Activated CD4-positive, alpha-beta T cell treated with anti-CD3 and anti-CD28 coated beads for 36 hours (primary cell): ENCODE measurements at regions of chr9 and their contacts with region 1.

Region 1: DNA sequence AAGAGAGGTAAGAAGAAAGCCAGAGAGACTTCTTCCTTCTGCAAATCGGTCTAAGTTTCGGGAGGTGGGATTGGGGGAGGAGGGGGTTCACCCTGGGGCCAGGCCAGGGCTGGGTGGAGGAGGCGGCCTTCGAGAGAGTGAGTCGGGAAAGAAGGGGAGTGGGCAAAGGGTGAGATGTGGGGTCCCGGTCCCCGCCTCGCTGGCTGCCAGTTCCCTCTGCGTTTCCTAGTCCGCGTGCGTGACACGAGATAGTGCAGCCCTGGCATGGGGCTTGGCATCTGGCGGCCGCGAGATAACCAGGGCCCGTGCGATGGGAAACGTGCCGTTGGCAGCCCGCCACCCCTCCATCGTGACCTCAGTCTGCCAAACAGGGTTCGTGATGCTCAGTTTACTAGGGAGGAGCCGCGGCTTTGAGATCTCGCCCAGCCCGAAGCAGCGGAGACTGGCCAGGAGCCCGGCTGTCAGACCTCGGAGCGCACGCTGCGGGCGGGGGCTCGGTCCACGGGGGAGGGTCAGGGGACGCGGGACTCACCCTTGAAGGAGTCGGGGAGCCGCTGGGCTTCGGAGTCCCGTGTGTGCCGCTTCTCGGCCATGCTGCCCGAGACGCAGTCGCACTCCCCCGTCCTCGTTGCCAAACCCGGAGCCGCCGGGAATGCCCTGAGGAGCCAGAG is at the start of gene STOM:
- DNase-seq: peak; percentile 81
- ATAC-seq: peak; percentile 57
- H3K4me3 Mint-ChIP-seq: peak within 1 kb of the TSS; percentile 76
- H3K27ac Mint-ChIP-seq: peak within 1 kb of the TSS; percentile 95
- H3K4me1 Mint-ChIP-seq: peaks cover 27% of the 10 kb centered on the region
- H3K27me3 Mint-ChIP-seq: no peaks in the 10 kb centered on the region
- total RNA-seq, gene STOM: 34.7 to 44.5 TPM

Region 2: DNA sequence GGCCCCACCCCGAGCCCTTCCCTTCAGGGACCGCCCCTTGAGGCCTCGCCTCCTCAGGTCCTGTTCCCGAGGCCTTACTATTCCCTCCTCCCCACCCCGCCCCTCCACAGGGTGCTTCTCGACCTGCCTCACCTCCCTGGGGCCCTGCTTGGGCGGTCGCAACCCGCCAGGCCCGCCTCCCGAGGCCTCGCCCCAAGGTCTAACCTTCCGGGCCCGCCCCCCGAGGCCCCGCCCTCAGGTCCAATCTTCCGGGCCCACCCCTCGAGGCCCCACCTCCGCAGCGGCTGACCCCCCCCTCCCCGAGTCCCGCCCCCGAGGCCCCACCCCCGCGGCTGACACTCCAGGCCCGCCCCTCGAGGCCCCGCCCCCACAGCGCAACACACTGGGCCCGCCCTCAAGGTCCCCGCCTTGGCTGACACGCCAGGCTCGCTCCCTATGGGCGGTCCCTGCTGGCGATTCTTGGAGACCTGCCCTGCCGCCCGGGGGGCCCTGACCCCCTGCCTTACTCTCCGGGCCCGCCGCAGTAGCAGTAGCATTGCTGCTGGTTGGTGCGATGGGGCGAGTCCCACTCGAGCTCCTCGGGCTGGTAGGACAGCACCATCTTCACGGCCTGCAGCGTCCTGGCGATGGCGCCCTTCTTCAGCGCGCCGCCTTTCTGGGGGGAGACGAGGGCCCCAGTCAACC is 500.9 kb before region 1 on chr9:
- CTCF ChIA-PET with region 1: no interaction called
- POLR2A ChIA-PET with region 1: no interaction called
- intact Hi-C with region 1: loop called in 1 of 2 experiments (anchors 1 kb)
- DNase-seq: peak; percentile 99
- ATAC-seq: peak; percentile 94
- H3K4me3 Mint-ChIP-seq: peak overlapping the region; percentile 64
- H3K27ac Mint-ChIP-seq: peak overlapping the region; percentile 70
- H3K4me1 Mint-ChIP-seq: peaks cover 40% of the 10 kb centered on the region
- H3K27me3 Mint-ChIP-seq: no peaks in the 10 kb centered on the region

Region 3: GRCh38 chr9:121353241-121354061 is 16.3 kb before region 1 on chr9:
- CTCF ChIA-PET with region 1: interaction called, 6 read pairs
- POLR2A ChIA-PET with region 1: no interaction called
- intact Hi-C with region 1: loop called (anchors 1 kb)
- DNase-seq: peak; percentile 69
- ATAC-seq: peak; percentile 95
- H3K4me3 Mint-ChIP-seq: no peak overlapping the region
- H3K27ac Mint-ChIP-seq: peak overlapping the region; percentile 74
- H3K4me1 Mint-ChIP-seq: peaks cover 44% of the 10 kb centered on the region
- H3K27me3 Mint-ChIP-seq: no peaks in the 10 kb centered on the region

Region 4: DNA sequence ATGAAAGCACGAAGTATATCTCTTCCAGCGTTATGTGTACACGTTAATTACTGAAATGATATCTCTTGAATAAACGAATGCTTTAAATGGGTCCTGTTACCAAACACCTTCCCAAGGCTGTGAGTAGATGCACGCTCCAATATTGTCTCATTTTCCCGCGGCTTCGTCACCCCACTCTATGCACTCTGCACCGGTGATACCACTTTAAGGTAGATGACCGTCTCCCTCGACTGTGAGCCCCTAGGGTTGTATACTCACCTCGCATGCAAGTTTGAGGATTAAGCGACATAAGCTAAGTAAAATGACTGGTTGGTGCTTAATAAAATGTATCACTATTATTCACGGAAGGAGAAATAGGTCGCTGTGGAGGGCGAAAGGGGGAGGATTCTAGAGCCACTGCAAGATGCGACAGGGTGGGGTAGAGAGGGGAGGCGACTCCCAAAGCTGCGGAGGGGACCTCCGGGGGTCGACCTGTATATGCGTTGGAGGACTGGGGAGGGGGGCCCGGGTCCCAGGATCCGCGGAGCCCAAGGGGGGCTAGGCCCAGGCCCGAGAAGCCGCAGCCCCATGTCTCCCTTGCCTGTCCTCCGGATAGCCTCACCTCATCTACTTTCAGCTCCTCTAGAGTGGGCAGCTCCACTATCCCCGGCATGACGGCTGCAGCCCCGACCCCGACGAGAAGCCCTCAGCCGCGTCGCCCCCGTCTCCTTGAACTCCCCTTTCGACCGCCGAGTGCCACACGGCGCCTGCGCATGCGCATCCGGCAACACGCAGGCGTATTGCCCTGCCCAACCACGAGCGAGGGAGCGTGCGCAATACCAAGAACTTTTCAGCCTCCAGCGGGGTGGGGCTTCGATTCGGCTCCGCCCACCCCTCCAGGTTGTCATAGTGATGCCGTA is 789.5 kb after region 1 on chr9 and contains the starts of genes MORN5 and NDUFA8:
- CTCF ChIA-PET with region 1: no interaction called
- POLR2A ChIA-PET with region 1: no interaction called
- intact Hi-C with region 1: loop called in 1 of 2 experiments (anchors 1 kb)
- DNase-seq: peak; percentile 98
- ATAC-seq: peak; percentile 97
- H3K4me3 Mint-ChIP-seq: peak within 1 kb of the TSS; percentile 95
- H3K27ac Mint-ChIP-seq: peak within 1 kb of the TSS; percentile 96
- H3K4me1 Mint-ChIP-seq: peaks cover 33% of the 10 kb centered on the region
- H3K27me3 Mint-ChIP-seq: peaks cover 13% of the 10 kb centered on the region
- total RNA-seq, gene MORN5: not detected
- total RNA-seq, gene NDUFA8: 50.4 to 57.2 TPM